ENCODE measurements at regions of chr11 and their contacts with region 1.

Region 1: DNA sequence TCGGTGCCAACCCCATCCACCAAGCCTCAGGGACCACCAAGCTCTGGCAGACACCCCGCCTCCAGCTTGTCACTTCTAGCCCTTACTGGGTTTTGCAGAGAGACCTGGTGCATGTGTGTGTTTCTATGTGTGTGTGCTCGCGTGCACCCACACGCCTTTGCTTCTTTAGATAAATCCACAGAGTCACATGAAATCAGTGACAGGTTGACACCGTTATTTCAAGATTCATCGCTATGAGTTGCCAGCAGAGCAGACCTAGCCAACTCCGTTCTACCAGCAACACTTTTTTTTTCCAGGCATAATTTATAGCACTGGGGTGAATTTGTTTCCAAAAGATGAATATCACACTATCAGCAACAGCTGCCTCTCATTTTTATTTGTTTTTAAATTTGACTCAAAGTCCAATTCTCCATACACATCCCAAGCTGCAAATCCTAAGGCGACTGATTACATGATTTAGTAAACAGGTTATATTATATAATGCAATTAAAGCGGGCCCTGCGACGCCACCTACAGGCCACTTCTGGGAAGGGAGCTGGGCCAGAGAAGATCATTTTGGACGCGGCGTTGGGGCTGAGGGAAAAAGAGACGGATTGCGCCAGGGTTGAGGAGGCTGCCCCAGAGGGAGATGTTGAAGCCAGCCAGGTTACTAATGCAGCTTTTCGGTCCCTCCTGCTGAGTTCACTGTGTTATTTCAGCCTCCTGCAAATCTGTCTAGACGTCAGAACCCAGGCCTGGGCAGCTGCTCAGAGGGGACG is 150.5 kb downstream of the FEZ1 start:
- DNase-seq: no peak
- ATAC-seq: peak; percentile 80
- H3K4me3 ChIP-seq: no peak overlapping the region
- H3K27ac ChIP-seq: no peak overlapping the region
- H3K4me1 ChIP-seq: no peaks in the 10 kb centered on the region
- H3K27me3 ChIP-seq: peaks cover 0 to 13% of the 10 kb centered on the region in 2 experiments; a peak in 2 of 4 replicates
- CTCF ChIP-seq: peak; percentile 68 to 76 (median 73)
- EP300 ChIP-seq: no peak
- POLR2A ChIP-seq: no peak
- RAD21 ChIP-seq: peak; percentile 50

Region 2: GRCh38 chr11:125091247-125091876 is 254.2 kb before region 1 on chr11:
- CTCF ChIA-PET with region 1: interaction called, 10 read pairs
- POLR2A ChIA-PET with region 1: no interaction called
- RAD21 ChIA-PET with region 1: interaction called, 8 read pairs
- SMC1A ChIA-PET with region 1: interaction called, 10 read pairs
- in situ Hi-C with region 1: no loop called
- intact Hi-C with region 1: loop called (anchors 1 kb)
- DNase-seq: no peak
- ATAC-seq: peak; percentile 86
- H3K4me3 ChIP-seq: no peak overlapping the region
- H3K27ac ChIP-seq: no peak overlapping the region
- H3K4me1 ChIP-seq: no peaks in the 10 kb centered on the region
- H3K27me3 ChIP-seq: no peaks in the 10 kb centered on the region
- CTCF ChIP-seq: peak; percentile 43 to 66 (median 54); a peak in 4 of 6 replicates
- EP300 ChIP-seq: no peak
- POLR2A ChIP-seq: no peak
- RAD21 ChIP-seq: peak; percentile 80

Region 3: GRCh38 chr11:125164422-125165110 is 181.0 kb before region 1 on chr11 and contains the start of gene PKNOX2:
- CTCF ChIA-PET with region 1: no interaction called
- POLR2A ChIA-PET with region 1: no interaction called
- RAD21 ChIA-PET with region 1: interaction called, 3 read pairs
- SMC1A ChIA-PET with region 1: no interaction called
- in situ Hi-C with region 1: no loop called
- intact Hi-C with region 1: loop called (anchors 5 kb)
- DNase-seq: no peak
- ATAC-seq: peak; percentile 76
- H3K4me3 ChIP-seq: no peak within 1 kb of the TSS
- H3K27ac ChIP-seq: no peak within 1 kb of the TSS
- H3K4me1 ChIP-seq: no peaks in the 10 kb centered on the region; the same call in 1 of the 2 replicates
- H3K27me3 ChIP-seq: peaks cover 24 to 33% of the 10 kb centered on the region in 2 experiments
- CTCF ChIP-seq: peak in 2 of 3 experiments; percentile 36 to 39; a peak in 3 of 6 replicates
- EP300 ChIP-seq: no peak
- POLR2A ChIP-seq: no peak
- RAD21 ChIP-seq: no peak
- polyA plus RNA-seq, gene PKNOX2: not detected

Region 4: DNA sequence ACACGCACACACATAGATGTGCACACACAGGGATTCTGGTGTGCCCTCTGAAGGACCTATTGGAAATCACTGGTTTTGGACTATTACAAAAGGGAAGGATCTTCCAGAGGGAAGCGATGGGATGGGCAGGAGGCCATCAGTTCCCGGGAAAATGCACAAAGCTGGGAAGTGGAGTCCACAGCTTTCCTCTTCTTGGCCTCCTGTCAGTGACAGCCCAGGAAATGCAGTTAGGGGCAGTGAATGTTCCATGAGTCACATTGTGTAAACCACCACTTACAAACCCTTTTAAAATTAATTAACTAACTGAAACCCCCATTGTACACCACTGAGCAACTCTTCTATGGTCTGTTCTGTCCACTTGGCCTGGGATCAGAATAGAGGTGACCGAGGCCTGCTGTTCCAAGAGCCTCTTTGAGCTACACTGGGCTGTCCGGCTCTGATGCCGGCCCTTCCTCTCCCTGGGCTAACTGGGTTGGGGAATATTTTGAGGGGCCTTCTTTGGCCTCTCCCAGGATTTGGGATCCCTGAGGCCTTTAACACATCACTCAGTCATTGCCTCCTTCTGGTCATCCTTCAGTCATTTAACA is 12.7 kb after region 1 on chr11:
- CTCF ChIA-PET with region 1: interaction called, 44 read pairs
- POLR2A ChIA-PET with region 1: no interaction called
- RAD21 ChIA-PET with region 1: interaction called, 3 read pairs
- SMC1A ChIA-PET with region 1: interaction called, 12 read pairs
- in situ Hi-C with region 1: no loop called
- intact Hi-C with region 1: no loop called
- DNase-seq: no peak
- ATAC-seq: peak; percentile 23; the same call in 2 of the 3 replicates
- H3K4me3 ChIP-seq: no peak overlapping the region
- H3K27ac ChIP-seq: no peak overlapping the region
- H3K4me1 ChIP-seq: no peaks in the 10 kb centered on the region; the same call in 1 of the 2 replicates
- H3K27me3 ChIP-seq: peaks cover 0 to 1% of the 10 kb centered on the region in 2 experiments; a peak in 2 of 4 replicates
- CTCF ChIP-seq: no peak
- EP300 ChIP-seq: no peak
- POLR2A ChIP-seq: no peak
- RAD21 ChIP-seq: no peak

Region 5: DNA sequence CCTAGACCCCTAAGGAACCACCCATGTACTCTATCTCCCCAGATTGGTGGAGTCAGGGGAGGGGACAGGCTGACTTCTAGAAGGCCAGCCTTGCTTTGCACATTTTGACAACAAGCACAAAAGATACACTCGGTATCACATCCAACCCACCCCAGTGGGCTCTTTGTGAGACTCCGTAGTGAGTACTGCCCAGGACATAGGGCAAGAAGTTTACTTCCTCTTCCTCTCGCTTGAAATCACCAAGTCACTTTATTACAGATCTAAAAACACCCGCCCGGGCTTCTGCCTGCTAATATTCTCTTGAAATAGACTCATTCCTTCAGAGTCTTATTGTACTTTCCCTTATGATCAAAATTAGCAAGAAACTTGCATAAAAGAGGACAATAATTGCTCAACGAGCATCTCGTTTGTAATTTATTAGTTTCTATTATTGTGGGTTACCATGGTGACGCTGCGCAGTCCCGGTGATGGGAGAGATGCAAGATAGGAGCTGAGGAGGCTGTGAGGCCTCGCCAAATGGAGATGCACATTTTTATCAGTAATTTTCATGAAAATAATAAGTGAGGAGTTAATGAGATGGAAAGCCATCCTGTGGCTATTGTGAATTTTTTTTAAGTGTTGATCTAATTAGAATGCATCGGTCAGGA is 53.5 kb after region 1 on chr11:
- CTCF ChIA-PET with region 1: interaction called, 71 read pairs
- POLR2A ChIA-PET with region 1: no interaction called
- RAD21 ChIA-PET with region 1: interaction called, 8 read pairs
- SMC1A ChIA-PET with region 1: interaction called, 6 read pairs
- in situ Hi-C with region 1: no loop called
- intact Hi-C with region 1: no loop called
- DNase-seq: no peak
- ATAC-seq: peak; percentile 74
- H3K4me3 ChIP-seq: no peak overlapping the region
- H3K27ac ChIP-seq: no peak overlapping the region
- H3K4me1 ChIP-seq: no peaks in the 10 kb centered on the region; the same call in 1 of the 2 replicates
- H3K27me3 ChIP-seq: peaks cover 10 to 14% of the 10 kb centered on the region in 2 experiments
- CTCF ChIP-seq: no peak
- EP300 ChIP-seq: no peak
- POLR2A ChIP-seq: no peak
- RAD21 ChIP-seq: no peak

Region 6: DNA sequence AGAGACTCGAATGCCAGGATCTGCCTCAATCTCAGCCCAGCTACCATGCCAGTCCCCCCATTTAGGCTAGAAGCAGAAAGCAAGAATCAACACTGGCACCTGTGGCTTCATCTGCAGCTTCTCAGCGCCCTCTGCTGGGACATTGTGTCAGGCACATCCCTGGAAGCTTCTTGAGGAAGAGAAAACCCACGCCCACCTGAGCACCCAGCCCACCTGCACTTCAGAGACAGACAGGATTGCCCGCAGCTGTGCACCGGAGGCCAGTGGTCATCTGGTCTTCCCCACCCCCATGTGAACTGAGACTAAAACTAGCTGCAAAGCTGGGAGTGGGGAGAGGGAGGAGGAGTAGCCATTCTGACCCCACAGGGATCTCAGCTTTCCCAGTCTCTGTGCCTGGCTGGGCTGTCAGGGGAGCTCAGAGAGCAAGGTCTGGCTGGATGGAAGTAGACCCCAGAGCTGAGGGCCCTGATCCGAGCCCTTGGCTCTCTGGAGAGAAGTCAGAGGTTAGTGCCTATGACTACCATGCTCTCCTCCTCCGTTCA is 83.6 kb after region 1 on chr11:
- CTCF ChIA-PET with region 1: interaction called, 13 read pairs
- POLR2A ChIA-PET with region 1: no interaction called
- RAD21 ChIA-PET with region 1: no interaction called
- SMC1A ChIA-PET with region 1: interaction called, 3 read pairs
- in situ Hi-C with region 1: no loop called
- intact Hi-C with region 1: no loop called
- DNase-seq: no peak
- ATAC-seq: peak; percentile 83
- H3K4me3 ChIP-seq: no peak overlapping the region
- H3K27ac ChIP-seq: no peak overlapping the region
- H3K4me1 ChIP-seq: no peaks in the 10 kb centered on the region
- H3K27me3 ChIP-seq: peaks cover 0 to 3% of the 10 kb centered on the region in 2 experiments; a peak in 2 of 4 replicates
- CTCF ChIP-seq: peak; percentile 76 to 87 (median 83)
- EP300 ChIP-seq: no peak
- POLR2A ChIP-seq: no peak
- RAD21 ChIP-seq: peak; percentile 57